Naive thymus-derived CD4-positive, alpha-beta T cell (primary cell): ENCODE measurements at regions of chr17 and their contacts with region 1.

Region 1: DNA sequence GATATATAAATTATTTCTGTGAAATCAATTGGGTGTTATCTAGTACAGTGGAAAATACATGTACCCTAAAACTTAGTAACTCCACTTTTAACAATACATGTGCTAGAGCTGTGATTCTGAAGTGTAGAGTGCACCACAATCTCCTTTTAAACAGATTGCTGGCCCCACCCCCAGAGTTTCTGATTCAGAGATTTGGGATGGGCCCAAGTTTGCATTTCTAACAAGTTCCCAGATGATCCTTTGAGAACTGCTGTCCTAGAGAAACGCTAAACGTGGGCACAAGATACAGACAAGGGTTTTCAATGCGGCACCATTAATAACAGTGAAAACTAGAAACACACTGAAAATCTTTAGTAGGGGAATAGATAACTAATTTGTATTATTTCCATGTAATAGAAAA is 49.2 kb downstream of the NXPH3 start:
- DNase-seq: no peak
- ATAC-seq: no peak
- H3K4me3 ChIP-seq: no peak overlapping the region
- H3K4me3 Mint-ChIP-seq: no peak overlapping the region
- H3K27ac ChIP-seq: no peak overlapping the region
- H3K27ac Mint-ChIP-seq: no peak overlapping the region
- H3K4me1 ChIP-seq: peaks cover 0 to 6% of the 10 kb centered on the region in 2 donors
- H3K4me1 Mint-ChIP-seq: peaks cover 14 to 46% (median 36%) of the 10 kb centered on the region in 7 donors
- H3K27me3 ChIP-seq: no peaks in the 10 kb centered on the region
- H3K27me3 Mint-ChIP-seq: no peaks in the 10 kb centered on the region

Region 2: DNA sequence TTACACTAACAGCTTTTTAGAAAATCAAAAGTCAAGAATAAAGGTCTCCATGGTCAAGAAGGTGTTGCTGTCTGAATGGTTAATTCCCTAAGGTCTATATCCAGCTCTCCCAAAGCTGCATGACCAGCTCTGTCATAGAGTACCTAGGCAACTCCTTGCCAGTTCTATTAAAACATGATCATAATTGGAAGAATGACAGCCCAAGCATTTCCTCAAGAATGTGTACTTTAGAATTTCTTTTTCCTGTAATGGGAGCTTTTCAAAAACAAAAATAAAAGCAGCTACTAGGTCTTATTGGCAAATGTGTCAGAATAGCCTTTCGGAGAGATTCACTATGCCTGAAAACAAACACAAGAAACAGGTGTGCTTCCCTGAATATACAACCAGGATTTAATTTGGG is 45.1 kb after region 1 on chr17:
- CTCF ChIA-PET with region 1: no interaction called
- POLR2A ChIA-PET with region 1: no interaction called
- intact Hi-C with region 1: loop called in 1 of 2 experiments (anchors 5 kb)
- DNase-seq: no peak
- ATAC-seq: no peak
- H3K4me3 ChIP-seq: no peak overlapping the region
- H3K4me3 Mint-ChIP-seq: peak overlapping the region in 3 of 10 donors; percentile 12 to 52 (median 14)
- H3K27ac ChIP-seq: no peak overlapping the region
- H3K27ac Mint-ChIP-seq: peak overlapping the region in 6 of 9 donors; percentile 17 to 57 (median 36)
- H3K4me1 ChIP-seq: peaks cover 8 to 20% of the 10 kb centered on the region in 2 donors
- H3K4me1 Mint-ChIP-seq: peaks cover 31 to 77% (median 67%) of the 10 kb centered on the region in 7 donors
- H3K27me3 ChIP-seq: no peaks in the 10 kb centered on the region
- H3K27me3 Mint-ChIP-seq: no peaks in the 10 kb centered on the region